Adrenal gland (tissue), 19 donors: ENCODE measurements at regions of chr21 and their contacts with region 1.

Region 1: DNA sequence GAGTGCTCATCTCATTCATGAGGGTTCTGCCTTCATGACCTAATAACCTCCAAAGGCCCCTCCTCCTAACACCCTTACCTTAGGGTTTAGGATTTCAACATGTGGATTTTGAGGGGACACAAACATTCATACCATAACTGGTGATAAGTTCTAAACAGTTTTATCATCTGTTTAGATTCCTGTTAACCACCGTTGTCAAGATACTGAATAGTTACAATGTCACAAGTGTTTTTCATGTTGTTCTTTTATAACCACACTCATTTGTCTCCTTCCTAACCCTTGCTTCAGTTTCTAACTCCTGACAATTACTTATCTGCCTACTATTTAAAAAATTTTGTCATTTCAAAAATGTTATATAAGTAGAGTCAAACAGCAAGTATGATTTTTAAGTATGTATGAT is 86.0 kb downstream of the NCAM2 start:
- DNase-seq: no peak
- H3K4me3 ChIP-seq: no peak overlapping the region
- H3K27ac ChIP-seq: no peak overlapping the region
- H3K4me1 ChIP-seq: no peaks in the 10 kb centered on the region
- H3K27me3 ChIP-seq: no peaks in the 10 kb centered on the region
- CTCF ChIP-seq: no peak
- POLR2A ChIP-seq: no peak

Region 2: GRCh38 chr21:21067375-21067774 is 16.8 kb before region 1 on chr21:
- intact Hi-C with region 1: loop called in 1 of 2 experiments (anchors 2 kb)
- DNase-seq: no peak
- H3K4me3 ChIP-seq: no peak overlapping the region
- H3K27ac ChIP-seq: no peak overlapping the region
- H3K4me1 ChIP-seq: no peaks in the 10 kb centered on the region
- H3K27me3 ChIP-seq: no peaks in the 10 kb centered on the region
- CTCF ChIP-seq: no peak
- POLR2A ChIP-seq: no peak

Region 3: GRCh38 chr21:21341041-21341440 is 256.9 kb after region 1 on chr21:
- intact Hi-C with region 1: no loop called
- DNase-seq: no peak
- H3K4me3 ChIP-seq: no peak overlapping the region
- H3K27ac ChIP-seq: no peak overlapping the region
- H3K4me1 ChIP-seq: no peaks in the 10 kb centered on the region
- H3K27me3 ChIP-seq: no peaks in the 10 kb centered on the region
- CTCF ChIP-seq: no peak
- POLR2A ChIP-seq: no peak

Region 4: DNA sequence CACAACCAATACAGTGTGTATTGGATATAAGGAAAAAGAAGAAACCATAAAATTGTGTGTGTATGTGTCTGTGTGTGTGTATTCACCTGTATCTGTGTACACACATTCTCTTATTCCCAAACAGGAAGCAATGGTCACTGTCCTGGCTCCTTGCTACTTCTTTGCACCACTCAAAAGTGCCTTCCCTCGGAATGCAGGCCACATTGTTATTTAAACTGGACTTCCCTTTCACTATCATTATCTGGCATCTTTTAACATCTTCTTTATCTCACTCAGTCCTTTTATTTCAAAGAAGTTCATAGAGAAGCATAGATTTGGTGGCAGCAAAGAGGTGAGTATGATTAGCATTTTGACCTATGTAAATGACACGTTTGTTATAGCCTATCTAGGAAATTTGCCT is 717.7 kb after region 1 on chr21:
- intact Hi-C with region 1: no loop called
- DNase-seq: no peak
- H3K4me3 ChIP-seq: no peak overlapping the region
- H3K27ac ChIP-seq: no peak overlapping the region
- H3K4me1 ChIP-seq: no peaks in the 10 kb centered on the region
- H3K27me3 ChIP-seq: no peaks in the 10 kb centered on the region
- CTCF ChIP-seq: no peak
- POLR2A ChIP-seq: no peak